ENCODE measurements at regions of chr20 and their contacts with region 1.

Region 1: GRCh38 chr20:46681032-46681854 is 8.0 kb downstream of the TP53RK start:
- DNase-seq: peak; percentile 83
- ATAC-seq: peak; percentile 80
- H3K4me3 Mint-ChIP-seq: no peak overlapping the region
- H3K27ac Mint-ChIP-seq: no peak overlapping the region
- H3K4me1 Mint-ChIP-seq: peaks cover 29% of the 10 kb centered on the region
- H3K27me3 Mint-ChIP-seq: no peaks in the 10 kb centered on the region

Region 2: GRCh38 chr20:46520976-46521579 is 160.2 kb before region 1 on chr20:
- CTCF ChIA-PET with region 1: interaction called, 16 read pairs
- POLR2A ChIA-PET with region 1: no interaction called
- intact Hi-C with region 1: loop called (anchors 1 kb)
- DNase-seq: peak; percentile 69
- ATAC-seq: peak; percentile 95
- H3K4me3 Mint-ChIP-seq: no peak overlapping the region
- H3K27ac Mint-ChIP-seq: no peak overlapping the region
- H3K4me1 Mint-ChIP-seq: no peaks in the 10 kb centered on the region
- H3K27me3 Mint-ChIP-seq: peaks cover 21% of the 10 kb centered on the region

Region 3: GRCh38 chr20:46731770-46732169 is 50.5 kb after region 1 on chr20:
- CTCF ChIA-PET with region 1: no interaction called
- POLR2A ChIA-PET with region 1: no interaction called
- intact Hi-C with region 1: no loop called
- DNase-seq: no peak
- ATAC-seq: no peak
- H3K4me3 Mint-ChIP-seq: no peak overlapping the region
- H3K27ac Mint-ChIP-seq: no peak overlapping the region
- H3K4me1 Mint-ChIP-seq: peaks cover 3% of the 10 kb centered on the region
- H3K27me3 Mint-ChIP-seq: peaks cover 7% of the 10 kb centered on the region

Region 4: GRCh38 chr20:46803122-46804020 is 122.1 kb after region 1 on chr20:
- CTCF ChIA-PET with region 1: no interaction called
- POLR2A ChIA-PET with region 1: no interaction called
- intact Hi-C with region 1: no loop called
- DNase-seq: no peak
- ATAC-seq: no peak
- H3K4me3 Mint-ChIP-seq: no peak overlapping the region
- H3K27ac Mint-ChIP-seq: no peak overlapping the region
- H3K4me1 Mint-ChIP-seq: no peaks in the 10 kb centered on the region
- H3K27me3 Mint-ChIP-seq: peaks cover 24% of the 10 kb centered on the region